ENCODE measurements at regions of chr9 and their contacts with region 1.

Region 1: GRCh38 chr9:92706216-92706940 is 36.4 kb upstream of the IPPK start:
- DNase-seq: no peak
- H3K4me3 ChIP-seq: no peak overlapping the region
- H3K27ac ChIP-seq: no peak overlapping the region
- H3K4me1 ChIP-seq: no peaks in the 10 kb centered on the region
- H3K27me3 ChIP-seq: no peaks in the 10 kb centered on the region
- CTCF ChIP-seq: peak; percentile 40

Region 2: DNA sequence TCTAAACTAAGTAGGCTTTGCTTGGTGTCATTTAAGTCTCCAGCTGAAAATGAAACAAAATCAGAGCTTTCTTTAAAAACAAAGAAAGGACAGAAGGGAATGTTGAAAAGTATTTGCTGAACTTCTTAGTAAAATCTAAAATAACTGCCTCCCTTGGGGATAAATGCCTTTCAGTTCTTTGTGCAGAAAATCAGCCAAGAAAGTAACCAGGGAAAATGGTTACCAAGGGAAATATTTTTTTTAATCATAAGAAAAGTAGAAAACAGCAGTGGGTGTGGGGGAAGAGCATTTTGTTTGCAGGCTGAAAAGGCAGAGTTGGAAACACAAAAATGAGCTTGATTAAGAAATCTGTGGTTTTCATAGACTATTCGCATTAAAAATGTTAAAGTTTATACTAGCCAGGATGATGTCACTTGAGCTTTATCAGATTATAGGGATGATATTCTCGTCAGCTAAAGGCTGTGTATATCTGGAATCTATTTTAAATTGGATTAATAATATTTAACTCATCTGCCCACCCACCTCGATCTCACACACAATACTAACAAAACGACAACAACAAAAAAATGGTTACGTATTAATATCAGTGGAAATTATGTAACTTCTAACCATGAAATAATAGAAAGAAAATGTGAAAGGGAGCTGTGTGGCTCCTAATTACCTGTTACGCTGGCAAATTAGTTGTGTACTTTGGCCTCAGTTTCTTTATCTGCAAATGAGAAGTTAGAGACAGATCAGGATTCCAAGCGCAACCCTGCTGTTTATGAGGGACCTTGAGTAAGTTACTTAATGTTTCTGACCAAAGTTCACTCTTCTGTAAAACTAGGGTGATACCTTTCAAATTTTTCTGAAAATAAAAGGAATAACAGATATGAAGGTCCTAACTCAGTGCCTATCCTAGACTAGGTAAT is 170.2 kb before region 1 on chr9 and contains the start of gene ECM2:
- intact Hi-C with region 1: no loop called
- DNase-seq: no peak
- H3K4me3 ChIP-seq: no peak within 1 kb of the TSS
- H3K27ac ChIP-seq: no peak within 1 kb of the TSS
- H3K4me1 ChIP-seq: no peaks in the 10 kb centered on the region
- H3K27me3 ChIP-seq: no peaks in the 10 kb centered on the region
- CTCF ChIP-seq: no peak
- total RNA-seq, gene ECM2: 0.30 to 3.8 TPM

Region 3: DNA sequence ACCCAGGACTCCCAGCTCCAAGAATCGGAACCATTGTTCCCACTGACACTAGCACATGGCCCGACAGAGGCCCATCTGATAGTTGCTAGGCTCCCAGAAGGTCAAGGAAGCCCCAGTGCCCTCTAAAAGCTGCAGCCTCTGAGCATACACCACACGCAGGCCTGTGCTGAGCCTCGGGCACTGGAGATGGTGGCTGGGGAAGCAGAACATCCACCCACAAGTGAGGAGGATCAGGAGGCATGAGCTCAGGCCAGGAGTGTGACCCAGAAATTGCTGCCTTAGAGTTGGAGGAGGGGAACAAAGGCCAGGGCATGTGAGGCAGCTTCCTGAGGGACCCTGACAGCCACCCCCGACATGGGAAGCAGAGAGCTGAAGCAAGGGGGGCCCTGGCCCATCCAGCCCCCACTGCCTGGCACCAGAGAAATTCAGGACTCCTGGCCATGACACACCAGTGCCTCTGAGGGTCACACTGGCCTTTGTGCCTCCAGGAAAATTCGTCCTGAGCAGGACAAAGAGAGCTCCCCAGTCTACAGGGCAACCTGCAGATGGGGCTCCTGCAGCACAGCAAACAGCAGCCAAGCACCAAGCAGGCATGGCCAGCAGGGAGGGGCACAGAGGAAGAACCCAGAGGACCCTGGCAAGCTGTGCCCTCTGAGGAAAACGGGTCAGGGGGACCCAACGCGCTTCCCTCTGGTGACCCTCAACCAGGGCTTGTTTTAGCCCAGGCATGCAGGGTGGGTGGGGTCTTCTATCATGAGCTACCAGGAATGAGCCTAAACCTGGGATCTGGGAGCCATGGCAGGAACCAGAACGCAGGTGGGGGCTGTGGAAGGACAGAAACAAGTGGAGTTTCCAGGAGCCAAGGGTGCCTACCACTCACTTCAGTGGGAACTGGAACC is 57.7 kb before region 1 on chr9:
- intact Hi-C with region 1: loop called (anchors 10 kb)
- DNase-seq: no peak
- H3K4me3 ChIP-seq: no peak overlapping the region
- H3K27ac ChIP-seq: no peak overlapping the region
- H3K4me1 ChIP-seq: no peaks in the 10 kb centered on the region
- H3K27me3 ChIP-seq: no peaks in the 10 kb centered on the region
- CTCF ChIP-seq: no peak

Region 4: GRCh38 chr9:92963831-92964626 is 257.7 kb after region 1 on chr9:
- intact Hi-C with region 1: no loop called
- DNase-seq: peak; percentile 38
- H3K4me3 ChIP-seq: peak overlapping the region; percentile 32
- H3K27ac ChIP-seq: peak overlapping the region; percentile 71
- H3K4me1 ChIP-seq: no peaks in the 10 kb centered on the region
- H3K27me3 ChIP-seq: no peaks in the 10 kb centered on the region
- CTCF ChIP-seq: no peak